B cell (primary cell): ENCODE measurements at regions of chr6 and their contacts with region 1.

Region 1: GRCh38 chr6:159968440-159969203 is at the start of gene IGF2R:
- DNase-seq: peak; percentile 94
- ATAC-seq: peak; percentile 87
- H3K4me3 ChIP-seq: peak within 1 kb of the TSS; percentile 54 to 85 (median 63)
- H3K4me3 Mint-ChIP-seq: peak within 1 kb of the TSS; percentile 92
- H3K27ac ChIP-seq: peak within 1 kb of the TSS; percentile 73 to 75
- H3K27ac Mint-ChIP-seq: peak within 1 kb of the TSS; percentile 92
- H3K4me1 ChIP-seq: peaks cover 12 to 25% of the 10 kb centered on the region in 2 donors
- H3K4me1 Mint-ChIP-seq: peaks cover 36% of the 10 kb centered on the region
- H3K27me3 ChIP-seq: no peaks in the 10 kb centered on the region
- H3K27me3 Mint-ChIP-seq: no peaks in the 10 kb centered on the region
- CTCF ChIP-seq: no peak
- total RNA-seq, gene IGF2R: 53.3 and 58.0 TPM in 2 replicates

Region 2: DNA sequence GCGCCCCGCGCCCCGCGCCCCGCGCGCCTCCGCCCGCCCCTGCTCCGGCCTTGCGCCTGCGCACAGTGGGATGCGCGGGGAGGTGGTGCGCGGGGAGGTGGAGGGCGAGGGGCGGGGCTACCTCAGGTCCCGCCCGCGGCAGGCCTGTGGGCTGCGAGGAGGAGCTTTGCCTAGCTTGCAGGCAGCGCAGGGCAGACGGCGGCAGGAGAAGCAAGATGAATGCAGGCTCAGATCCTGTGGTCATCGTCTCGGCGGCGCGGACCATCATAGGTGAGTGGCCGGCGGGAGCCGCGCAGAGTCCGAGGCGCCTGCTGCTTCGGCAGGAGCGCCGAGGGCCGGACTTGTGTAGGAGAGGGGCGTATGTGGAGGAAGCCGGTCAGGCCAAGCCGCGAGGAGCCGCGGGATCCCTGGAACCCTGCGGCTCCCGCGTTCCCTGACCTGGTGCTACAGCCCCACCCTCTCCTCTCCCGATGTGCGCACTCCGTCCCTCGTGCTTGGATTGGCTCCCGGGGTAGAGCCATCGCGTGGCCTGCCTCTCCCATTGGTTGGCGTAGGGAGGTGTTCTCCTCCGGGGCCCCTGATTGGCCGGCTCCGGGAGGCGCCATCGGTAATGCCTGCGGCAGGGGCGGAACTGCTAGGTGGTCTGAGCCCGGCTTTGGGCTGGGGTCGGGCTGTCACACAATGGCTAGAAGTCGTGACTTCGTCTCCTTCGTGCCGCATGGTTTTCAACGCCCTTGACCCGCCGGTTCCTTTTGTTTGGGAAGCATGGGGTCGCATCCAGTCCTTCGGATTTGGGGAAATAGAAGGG is 206.5 kb before region 1 on chr6 and contains the start of gene ACAT2:
- CTCF ChIA-PET with region 1: no interaction called
- POLR2A ChIA-PET with region 1: no interaction called
- intact Hi-C with region 1: loop called (anchors 1 kb)
- DNase-seq: peak; percentile 94
- ATAC-seq: peak; percentile 96
- H3K4me3 ChIP-seq: peak within 1 kb of the TSS; percentile 83 to 99 (median 93)
- H3K4me3 Mint-ChIP-seq: peak within 1 kb of the TSS; percentile 95
- H3K27ac ChIP-seq: peak within 1 kb of the TSS; percentile 95 to 96
- H3K27ac Mint-ChIP-seq: peak within 1 kb of the TSS; percentile 96
- H3K4me1 ChIP-seq: peaks cover 17 to 19% of the 10 kb centered on the region in 2 donors
- H3K4me1 Mint-ChIP-seq: peaks cover 21% of the 10 kb centered on the region
- H3K27me3 ChIP-seq: no peaks in the 10 kb centered on the region
- H3K27me3 Mint-ChIP-seq: no peaks in the 10 kb centered on the region
- CTCF ChIP-seq: no peak
- total RNA-seq, gene ACAT2: 31.1 and 32.6 TPM in 2 replicates

Region 3: GRCh38 chr6:160028487-160029275 is 60.1 kb after region 1 on chr6:
- CTCF ChIA-PET with region 1: no interaction called
- POLR2A ChIA-PET with region 1: no interaction called
- intact Hi-C with region 1: loop called (anchors 5 kb)
- DNase-seq: peak; percentile 45
- ATAC-seq: peak; percentile 51
- H3K4me3 ChIP-seq: no peak overlapping the region
- H3K4me3 Mint-ChIP-seq: no peak overlapping the region
- H3K27ac ChIP-seq: peak overlapping the region in 1 of 2 donors; percentile 23
- H3K27ac Mint-ChIP-seq: no peak overlapping the region
- H3K4me1 ChIP-seq: peaks cover 5 to 22% of the 10 kb centered on the region in 2 donors
- H3K4me1 Mint-ChIP-seq: peaks cover 24% of the 10 kb centered on the region
- H3K27me3 ChIP-seq: no peaks in the 10 kb centered on the region
- H3K27me3 Mint-ChIP-seq: no peaks in the 10 kb centered on the region
- CTCF ChIP-seq: no peak